T-cell (primary cell): ENCODE measurements at regions of chr1 and their contacts with region 1.

Region 1: DNA sequence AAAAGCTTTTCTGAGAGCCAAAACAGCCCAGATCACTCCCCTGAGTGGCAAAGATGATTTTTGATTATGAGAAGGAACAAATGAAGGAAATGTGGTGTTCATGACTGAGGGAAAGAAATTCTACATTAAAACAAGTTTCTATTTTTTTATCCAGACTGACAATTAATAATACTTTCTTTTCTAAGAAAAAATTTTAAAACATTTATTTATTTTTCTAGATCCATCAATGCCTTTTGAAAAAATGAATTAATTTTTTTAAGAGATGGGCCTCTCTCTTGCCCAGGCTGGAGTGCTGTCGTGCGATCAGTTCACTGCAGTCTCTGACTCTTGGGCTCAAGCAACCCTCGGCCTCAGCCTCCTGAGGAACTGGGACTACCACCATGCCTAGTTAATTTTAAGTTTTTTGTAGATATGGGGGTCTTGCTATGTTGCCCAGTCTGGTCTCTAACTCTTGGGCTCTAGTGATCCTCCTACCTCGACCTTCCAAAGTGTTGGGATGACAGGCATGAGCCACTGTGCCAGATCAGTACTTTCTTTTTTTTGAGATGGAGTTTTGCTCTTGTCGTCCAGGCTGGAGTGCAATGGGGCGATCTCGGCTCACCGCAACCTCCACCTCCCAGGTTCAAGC is 11.2 kb upstream of the TXNIP start:
- DNase-seq: no peak
- ATAC-seq: no peak
- H3K4me3 ChIP-seq: no peak overlapping the region
- H3K4me3 Mint-ChIP-seq: peak overlapping the region in 1 of 3 donors; percentile 68
- H3K27ac ChIP-seq: peak overlapping the region; percentile 81
- H3K27ac Mint-ChIP-seq: peak overlapping the region; percentile 83 to 87
- H3K4me1 ChIP-seq: peaks cover 14 to 42% of the 10 kb centered on the region in 2 experiments
- H3K4me1 Mint-ChIP-seq: peaks cover 40 to 54% (median 43%) of the 10 kb centered on the region in 3 donors
- H3K27me3 ChIP-seq: no peaks in the 10 kb centered on the region
- H3K27me3 Mint-ChIP-seq: no peaks in the 10 kb centered on the region

Region 2: GRCh38 chr1:145895471-145895870 is 112.1 kb before region 1 on chr1:
- CTCF ChIA-PET with region 1: no interaction called
- POLR2A ChIA-PET with region 1: no interaction called
- DNase-seq: no peak
- ATAC-seq: no peak
- H3K4me3 ChIP-seq: no peak overlapping the region
- H3K4me3 Mint-ChIP-seq: no peak overlapping the region
- H3K27ac ChIP-seq: no peak overlapping the region
- H3K27ac Mint-ChIP-seq: no peak overlapping the region
- H3K4me1 ChIP-seq: no peaks in the 10 kb centered on the region
- H3K4me1 Mint-ChIP-seq: no peaks in the 10 kb centered on the region
- H3K27me3 ChIP-seq: no peaks in the 10 kb centered on the region
- H3K27me3 Mint-ChIP-seq: no peaks in the 10 kb centered on the region

Region 3: GRCh38 chr1:145963995-145964901 is 43.4 kb before region 1 on chr1 and contains the starts of genes ANKRD34A and POLR3GL:
- CTCF ChIA-PET with region 1: interaction called, 4 to 12 read pairs
- POLR2A ChIA-PET with region 1: interaction called in 1 of 2 experiments, 4 read pairs
- DNase-seq: peak; percentile 80 to 98 (median 92)
- ATAC-seq: peak; percentile 90 to 91 (median 90)
- H3K4me3 ChIP-seq: peak within 1 kb of the TSS; percentile 78 to 89
- H3K4me3 Mint-ChIP-seq: peak within 1 kb of the TSS; percentile 88 to 95 (median 92)
- H3K27ac ChIP-seq: peak within 1 kb of the TSS; percentile 70
- H3K27ac Mint-ChIP-seq: peak within 1 kb of the TSS; percentile 94 to 99
- H3K4me1 ChIP-seq: peaks cover 32 to 54% of the 10 kb centered on the region in 2 experiments
- H3K4me1 Mint-ChIP-seq: peaks cover 54 to 72% (median 68%) of the 10 kb centered on the region in 3 donors
- H3K27me3 ChIP-seq: no peaks in the 10 kb centered on the region
- H3K27me3 Mint-ChIP-seq: no peaks in the 10 kb centered on the region
- total RNA-seq, gene ANKRD34A: 0.68 to 3.5 (median 1.7) TPM
- total RNA-seq, gene POLR3GL: 30.9 to 41.7 (median 38.3) TPM

Region 4: GRCh38 chr1:145996433-145997015 is 11.1 kb before region 1 on chr1 and contains the start of gene TXNIP:
- CTCF ChIA-PET with region 1: interaction called in 1 of 2 experiments, 13 read pairs
- POLR2A ChIA-PET with region 1: interaction called, 4 to 11 read pairs
- DNase-seq: peak; percentile 77 to 99 (median 94)
- ATAC-seq: peak; percentile 82 to 86 (median 82)
- H3K4me3 ChIP-seq: peak within 1 kb of the TSS; percentile 83 to 100
- H3K4me3 Mint-ChIP-seq: peak within 1 kb of the TSS; percentile 96 to 98 (median 98)
- H3K27ac ChIP-seq: peak within 1 kb of the TSS; percentile 82
- H3K27ac Mint-ChIP-seq: peak within 1 kb of the TSS; percentile 98 to 99
- H3K4me1 ChIP-seq: peaks cover 47 to 50% of the 10 kb centered on the region in 2 experiments
- H3K4me1 Mint-ChIP-seq: peaks cover 65 to 71% (median 69%) of the 10 kb centered on the region in 3 donors
- H3K27me3 ChIP-seq: no peaks in the 10 kb centered on the region
- H3K27me3 Mint-ChIP-seq: no peaks in the 10 kb centered on the region
- total RNA-seq, gene TXNIP: 721 to 2,117 (median 773) TPM